Endothelial cell of umbilical vein (primary cell): ENCODE measurements at regions of chr7 and their contacts with region 1.

Region 1: GRCh38 chr7:114085592-114086501 is 167.0 kb upstream of the PPP1R3A start:
- DNase-seq: peak; percentile 65
- H3K4me3 ChIP-seq: peak overlapping the region; percentile 60 to 82 (median 81)
- H3K27ac ChIP-seq: no peak overlapping the region
- H3K4me1 ChIP-seq: peaks cover 33% of the 10 kb centered on the region
- H3K27me3 ChIP-seq: peaks cover 59 to 73% of the 10 kb centered on the region in 2 experiments
- CTCF ChIP-seq: no peak
- POLR2A ChIP-seq: no peak

Region 2: GRCh38 chr7:114217026-114217425 is 131.2 kb after region 1 on chr7:
- CTCF ChIA-PET with region 1: no interaction called
- POLR2A ChIA-PET with region 1: no interaction called
- dilution Hi-C with region 1: no loop called
- intact Hi-C with region 1: loop called (anchors 2 kb)
- DNase-seq: no peak
- H3K4me3 ChIP-seq: no peak overlapping the region
- H3K27ac ChIP-seq: no peak overlapping the region
- H3K4me1 ChIP-seq: no peaks in the 10 kb centered on the region
- H3K27me3 ChIP-seq: no peaks in the 10 kb centered on the region
- CTCF ChIP-seq: no peak
- POLR2A ChIP-seq: no peak

Region 3: GRCh38 chr7:114539575-114539974 is 453.7 kb after region 1 on chr7:
- CTCF ChIA-PET with region 1: interaction called, 104 read pairs
- POLR2A ChIA-PET with region 1: no interaction called
- dilution Hi-C with region 1: no loop called
- intact Hi-C with region 1: loop called (anchors 1 kb)
- DNase-seq: peak; percentile 53
- H3K4me3 ChIP-seq: no peak overlapping the region
- H3K27ac ChIP-seq: no peak overlapping the region
- H3K4me1 ChIP-seq: no peaks in the 10 kb centered on the region
- H3K27me3 ChIP-seq: no peaks in the 10 kb centered on the region
- CTCF ChIP-seq: peak in 1 of 2 donors; percentile 43
- POLR2A ChIP-seq: no peak

Region 4: DNA sequence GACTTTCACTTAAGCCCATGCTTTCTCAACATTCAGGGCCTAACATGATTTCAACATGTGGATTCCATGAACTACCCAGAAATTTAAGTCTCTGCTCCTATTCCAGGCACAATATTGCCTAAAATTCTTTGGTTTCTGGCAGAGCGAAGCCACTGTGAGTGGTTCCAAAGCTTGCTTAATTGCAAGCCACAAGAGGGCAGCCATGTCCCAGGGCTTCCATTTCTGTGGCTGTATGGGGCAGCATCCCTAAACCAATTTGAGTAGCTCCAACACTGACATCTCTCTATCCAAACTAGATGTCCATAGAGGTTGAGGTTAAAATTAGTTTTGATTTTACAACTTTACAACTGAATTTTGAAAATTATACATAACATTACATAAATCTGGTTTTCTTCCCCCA is 779.7 kb after region 1 on chr7:
- CTCF ChIA-PET with region 1: interaction called, 31 read pairs
- POLR2A ChIA-PET with region 1: no interaction called
- dilution Hi-C with region 1: no loop called
- intact Hi-C with region 1: loop called (anchors 1 kb)
- DNase-seq: peak; percentile 64
- H3K4me3 ChIP-seq: no peak overlapping the region
- H3K27ac ChIP-seq: no peak overlapping the region
- H3K4me1 ChIP-seq: no peaks in the 10 kb centered on the region
- H3K27me3 ChIP-seq: no peaks in the 10 kb centered on the region
- CTCF ChIP-seq: peak; percentile 65 to 67
- POLR2A ChIP-seq: no peak

Region 5: DNA sequence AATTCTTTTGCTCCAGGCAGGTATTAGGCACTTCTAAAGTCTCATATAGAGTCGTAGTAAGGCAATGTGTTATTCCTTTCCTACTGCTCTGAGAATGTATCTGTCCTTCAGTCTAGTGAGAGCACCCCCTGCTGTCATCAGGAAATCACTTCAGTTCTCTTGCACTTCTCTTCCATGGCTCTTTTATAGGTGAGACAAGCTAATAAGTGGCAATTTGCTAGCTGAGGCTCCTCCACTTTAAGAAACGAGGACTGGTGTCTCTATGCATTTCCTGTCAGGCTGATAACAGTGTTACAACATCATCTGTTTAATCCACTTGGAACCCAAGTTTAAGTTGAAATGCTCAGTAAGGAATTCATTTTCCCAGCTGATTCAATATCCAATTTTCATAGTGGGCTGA is 1594.1 kb after region 1 on chr7:
- CTCF ChIA-PET with region 1: interaction called, 17 read pairs
- POLR2A ChIA-PET with region 1: no interaction called
- dilution Hi-C with region 1: no loop called
- intact Hi-C with region 1: loop called (anchors 5 kb)
- DNase-seq: peak; percentile 45
- H3K4me3 ChIP-seq: no peak overlapping the region
- H3K27ac ChIP-seq: no peak overlapping the region
- H3K4me1 ChIP-seq: no peaks in the 10 kb centered on the region
- H3K27me3 ChIP-seq: no peaks in the 10 kb centered on the region
- CTCF ChIP-seq: peak; percentile 19 to 55
- POLR2A ChIP-seq: no peak

Region 6: GRCh38 chr7:115910541-115911164 is 1824.8 kb after region 1 on chr7:
- CTCF ChIA-PET with region 1: interaction called, 13 read pairs
- POLR2A ChIA-PET with region 1: no interaction called
- dilution Hi-C with region 1: no loop called
- intact Hi-C with region 1: loop called (anchors 1 kb)
- DNase-seq: peak; percentile 64
- H3K4me3 ChIP-seq: no peak overlapping the region
- H3K27ac ChIP-seq: no peak overlapping the region
- H3K4me1 ChIP-seq: no peaks in the 10 kb centered on the region
- H3K27me3 ChIP-seq: no peaks in the 10 kb centered on the region
- CTCF ChIP-seq: peak in 1 of 2 donors; percentile 53
- POLR2A ChIP-seq: no peak